Dendritic cell treated with granulocyte-macrophage colony-stimulating factor and Interleukin-4, amounts not matched to agents 40 ng/mL and 50 ng/mL, for 4 days (primary cell): ENCODE measurements at regions of chr1 and their contacts with region 1.

Region 1: DNA sequence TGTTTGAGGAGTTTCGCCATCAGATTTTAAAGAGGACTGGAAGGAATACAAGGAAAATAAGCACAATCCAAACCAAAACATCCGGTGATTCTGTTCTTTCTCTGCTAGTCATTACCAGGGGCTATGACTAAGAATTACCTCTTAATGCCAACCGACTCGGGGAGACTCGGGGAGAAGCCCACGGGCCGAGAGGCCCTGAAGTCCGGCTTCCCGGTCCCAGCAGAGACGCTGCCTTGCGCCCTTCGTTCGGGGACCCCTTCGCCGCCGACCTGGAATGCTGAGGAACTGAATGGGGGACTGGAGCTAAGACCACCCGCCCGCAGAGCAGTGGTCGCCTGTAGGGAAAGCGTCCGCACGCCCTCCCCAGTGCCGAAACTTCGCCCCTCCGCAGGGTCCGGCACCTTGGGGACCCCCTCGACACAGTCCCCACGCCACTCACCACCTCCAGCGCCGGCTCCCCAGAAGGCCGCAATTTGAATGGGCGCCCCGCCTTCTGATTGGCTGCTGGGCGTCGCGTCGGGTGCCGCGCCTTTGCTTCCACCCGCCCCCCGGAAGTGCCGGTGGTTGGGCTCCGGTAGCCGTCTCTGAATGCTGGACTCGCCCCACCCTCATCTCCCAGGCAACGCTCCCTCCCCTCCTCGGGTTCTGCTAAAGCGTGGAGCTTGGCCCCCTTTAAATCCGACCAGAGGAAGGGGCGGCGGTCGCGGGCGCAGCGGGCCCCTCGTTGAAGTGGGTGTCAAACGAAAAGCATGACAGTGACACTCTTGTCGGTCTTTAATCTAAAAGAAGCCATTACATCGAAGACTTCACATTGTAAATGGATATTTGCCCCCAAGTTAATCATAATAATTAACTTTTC is at the start of gene KIF14:
- H3K4me3 Mint-ChIP-seq: peak within 1 kb of the TSS; percentile 93
- H3K27ac Mint-ChIP-seq: peak within 1 kb of the TSS; percentile 94
- H3K4me1 Mint-ChIP-seq: peaks cover 9% of the 10 kb centered on the region
- H3K27me3 Mint-ChIP-seq: no peaks in the 10 kb centered on the region

Region 2: GRCh38 chr1:200639790-200640669 is 19.5 kb after region 1 on chr1:
- intact Hi-C with region 1: loop called (anchors 2 kb)
- H3K4me3 Mint-ChIP-seq: no peak overlapping the region
- H3K27ac Mint-ChIP-seq: peak overlapping the region; percentile 84
- H3K4me1 Mint-ChIP-seq: peaks cover 36% of the 10 kb centered on the region
- H3K27me3 Mint-ChIP-seq: no peaks in the 10 kb centered on the region

Region 3: GRCh38 chr1:200738740-200739498 is 118.4 kb after region 1 on chr1 and contains the start of gene CAMSAP2:
- intact Hi-C with region 1: loop called (anchors 5 kb)
- H3K4me3 Mint-ChIP-seq: peak within 1 kb of the TSS; percentile 99
- H3K27ac Mint-ChIP-seq: peak within 1 kb of the TSS; percentile 100
- H3K4me1 Mint-ChIP-seq: peaks cover 42% of the 10 kb centered on the region
- H3K27me3 Mint-ChIP-seq: peaks cover 27% of the 10 kb centered on the region

Region 4: GRCh38 chr1:200802865-200803512 is 182.5 kb after region 1 on chr1:
- intact Hi-C with region 1: loop called (anchors 1 kb)
- H3K4me3 Mint-ChIP-seq: no peak overlapping the region
- H3K27ac Mint-ChIP-seq: no peak overlapping the region
- H3K4me1 Mint-ChIP-seq: peaks cover 18% of the 10 kb centered on the region
- H3K27me3 Mint-ChIP-seq: no peaks in the 10 kb centered on the region